A673 (cell line): ENCODE measurements at regions of chr1 and their contacts with region 1.

Region 1: GRCh38 chr1:166827426-166827825 is 11.8 kb upstream of the POGK start:
- DNase-seq: no peak
- H3K4me3 ChIP-seq: no peak overlapping the region
- H3K27ac ChIP-seq: no peak overlapping the region
- H3K4me1 ChIP-seq: no peaks in the 10 kb centered on the region
- H3K27me3 ChIP-seq: peaks cover 4% of the 10 kb centered on the region
- CTCF ChIP-seq: no peak

Region 2: DNA sequence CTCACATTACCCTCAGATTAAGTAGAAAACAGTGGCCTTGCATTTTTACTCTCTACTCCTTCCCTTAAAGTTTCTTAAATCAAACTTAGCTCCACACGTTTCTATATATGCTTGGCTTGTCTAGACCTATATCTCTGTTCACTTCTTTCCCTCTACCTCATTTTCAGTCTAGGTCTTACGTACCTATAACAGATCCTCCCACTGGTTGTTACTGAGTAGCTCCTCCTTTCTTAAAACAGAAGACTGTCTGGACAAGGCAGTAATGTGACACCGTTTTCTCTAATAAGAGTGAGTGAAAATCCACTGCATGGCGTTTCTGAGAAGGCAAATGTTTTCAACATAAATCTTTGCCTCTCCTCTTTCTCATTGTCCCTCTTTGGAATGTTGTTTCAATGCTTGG is 199.9 kb before region 1 on chr1:
- CTCF ChIA-PET with region 1: no interaction called
- POLR2A ChIA-PET with region 1: no interaction called
- intact Hi-C with region 1: loop called (anchors 5 kb)
- DNase-seq: no peak
- H3K4me3 ChIP-seq: no peak overlapping the region
- H3K27ac ChIP-seq: no peak overlapping the region
- H3K4me1 ChIP-seq: no peaks in the 10 kb centered on the region
- H3K27me3 ChIP-seq: peaks cover 40% of the 10 kb centered on the region
- CTCF ChIP-seq: no peak

Region 3: DNA sequence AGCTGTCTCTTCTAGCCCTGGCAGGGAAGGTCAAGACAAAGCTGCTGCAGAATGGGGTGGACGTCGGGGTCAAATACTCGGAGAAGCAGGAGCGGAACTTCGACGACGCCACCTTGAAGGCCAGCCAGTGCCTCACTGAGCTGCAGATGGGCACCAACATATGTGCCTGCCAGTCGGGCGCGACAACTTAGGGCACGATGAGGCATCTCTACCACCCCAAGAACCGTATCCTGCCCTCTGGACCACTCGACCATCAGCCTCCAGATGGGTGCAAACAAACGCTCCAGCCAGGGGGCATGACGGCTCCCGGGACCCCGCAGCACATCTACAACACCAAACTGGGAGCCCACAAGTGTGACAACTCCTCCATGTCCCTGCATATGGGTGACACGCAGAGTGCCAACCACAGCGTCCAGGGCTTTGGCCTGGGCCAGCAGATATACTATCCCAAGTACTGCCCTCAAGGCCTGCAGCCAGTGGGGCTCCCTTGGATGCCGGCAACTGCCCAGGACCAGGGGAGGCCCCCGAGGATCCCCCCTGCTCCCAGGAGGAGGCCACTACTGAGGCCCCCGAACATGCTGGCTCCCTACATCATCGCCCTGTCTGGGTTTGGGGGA is 30.7 kb before region 1 on chr1:
- CTCF ChIA-PET with region 1: no interaction called
- POLR2A ChIA-PET with region 1: no interaction called
- intact Hi-C with region 1: no loop called
- DNase-seq: no peak
- H3K4me3 ChIP-seq: no peak overlapping the region
- H3K27ac ChIP-seq: no peak overlapping the region
- H3K4me1 ChIP-seq: no peaks in the 10 kb centered on the region
- H3K27me3 ChIP-seq: peaks cover 28% of the 10 kb centered on the region
- CTCF ChIP-seq: no peak